ENCODE measurements at regions of chr3 and their contacts with region 1.

Region 1: DNA sequence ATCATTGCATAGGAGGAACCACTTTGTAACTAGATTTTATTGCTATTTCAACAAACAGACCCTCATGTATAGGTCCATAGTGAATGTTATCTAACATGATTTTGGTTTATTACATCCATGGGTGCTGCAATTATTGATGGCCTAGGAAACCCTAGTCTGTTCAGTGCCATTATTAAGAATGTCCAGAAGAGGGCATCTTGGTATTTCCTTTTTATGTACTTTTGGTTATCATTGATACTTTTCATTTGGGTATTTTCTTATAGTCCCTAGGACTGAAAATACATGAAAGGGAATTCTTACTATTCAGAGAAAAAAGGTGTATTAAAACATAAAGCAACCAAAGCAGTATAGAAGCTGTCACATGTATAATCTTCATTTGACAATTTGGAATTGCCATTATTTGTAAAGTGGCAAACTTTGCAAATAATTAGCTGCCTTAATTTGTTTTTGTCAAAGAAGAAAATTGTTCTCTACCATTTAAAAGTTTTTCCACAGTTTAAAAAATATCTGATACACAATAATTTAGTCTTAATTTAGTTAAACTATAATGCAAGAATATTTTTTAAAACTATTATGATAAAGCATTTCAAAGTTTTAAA is 48.7 kb downstream of the CNOT10 start:
- DNase-seq: no peak
- H3K4me3 ChIP-seq: no peak overlapping the region
- H3K27ac ChIP-seq: no peak overlapping the region
- H3K4me1 ChIP-seq: no peaks in the 10 kb centered on the region
- H3K27me3 ChIP-seq: no peaks in the 10 kb centered on the region
- CTCF ChIP-seq: peak in 4 of 5 experiments; percentile 34 to 49 (median 42)
- EP300 ChIP-seq: no peak
- POLR2A ChIP-seq: no peak

Region 2: DNA sequence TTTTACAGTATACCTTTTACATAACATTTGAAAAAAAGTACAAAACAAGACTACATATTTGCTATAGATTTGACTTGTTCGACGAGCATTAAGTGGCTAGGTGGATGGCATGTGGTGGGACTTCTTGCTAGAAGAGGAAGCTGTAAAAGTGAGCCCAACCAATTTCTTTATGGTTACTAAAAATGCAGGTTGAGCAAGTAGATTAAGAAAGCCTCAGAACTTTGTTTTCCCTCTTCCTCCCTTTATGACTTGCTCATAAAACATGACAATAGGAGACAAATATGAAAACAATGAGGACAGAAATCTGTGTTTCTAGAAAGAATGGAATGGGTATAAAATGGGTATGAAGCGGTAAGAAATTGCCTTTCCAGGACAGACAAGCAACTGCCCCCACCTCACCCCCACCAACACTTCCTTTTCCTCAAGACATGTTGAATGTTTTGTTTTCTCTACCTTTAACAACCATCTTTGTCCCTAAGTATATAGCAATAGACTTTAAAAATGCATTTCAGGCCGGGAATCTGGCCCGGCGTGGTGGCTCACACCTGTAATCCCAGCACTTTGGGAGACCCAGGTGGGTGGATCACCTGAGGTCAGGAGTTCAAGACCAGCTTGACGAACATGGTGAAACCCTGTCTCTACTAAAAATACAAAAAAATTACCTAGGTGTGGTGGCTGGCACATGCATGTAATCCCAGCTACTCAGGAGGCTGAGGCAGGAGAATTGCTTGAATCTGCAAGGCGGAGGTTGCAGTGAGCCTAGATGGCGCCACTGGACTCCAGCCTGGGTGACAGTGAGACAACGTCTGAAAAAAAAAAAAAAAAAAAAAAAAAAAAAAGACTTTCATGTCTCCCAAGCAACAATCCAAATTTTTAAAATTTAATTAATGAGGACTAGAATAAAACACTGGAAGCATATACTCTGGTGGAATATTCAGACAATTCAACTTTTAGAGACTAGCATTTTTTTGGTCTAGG is 168.0 kb after region 1 on chr3:
- in situ Hi-C with region 1: loop called in 1 of 4 experiments (anchors 25 kb)
- intact Hi-C with region 1: no loop called
- DNase-seq: peak; percentile 26
- H3K4me3 ChIP-seq: no peak overlapping the region
- H3K27ac ChIP-seq: no peak overlapping the region
- H3K4me1 ChIP-seq: no peaks in the 10 kb centered on the region
- H3K27me3 ChIP-seq: peaks cover 10% of the 10 kb centered on the region
- CTCF ChIP-seq: peak in 2 of 5 experiments; percentile 7 to 11
- EP300 ChIP-seq: no peak
- POLR2A ChIP-seq: no peak

Measured in transverse colon (tissue), 4 donors.